Sigmoid colon (tissue), 7 donors: ENCODE measurements at regions of chr17 and their contacts with region 1.

Region 1: DNA sequence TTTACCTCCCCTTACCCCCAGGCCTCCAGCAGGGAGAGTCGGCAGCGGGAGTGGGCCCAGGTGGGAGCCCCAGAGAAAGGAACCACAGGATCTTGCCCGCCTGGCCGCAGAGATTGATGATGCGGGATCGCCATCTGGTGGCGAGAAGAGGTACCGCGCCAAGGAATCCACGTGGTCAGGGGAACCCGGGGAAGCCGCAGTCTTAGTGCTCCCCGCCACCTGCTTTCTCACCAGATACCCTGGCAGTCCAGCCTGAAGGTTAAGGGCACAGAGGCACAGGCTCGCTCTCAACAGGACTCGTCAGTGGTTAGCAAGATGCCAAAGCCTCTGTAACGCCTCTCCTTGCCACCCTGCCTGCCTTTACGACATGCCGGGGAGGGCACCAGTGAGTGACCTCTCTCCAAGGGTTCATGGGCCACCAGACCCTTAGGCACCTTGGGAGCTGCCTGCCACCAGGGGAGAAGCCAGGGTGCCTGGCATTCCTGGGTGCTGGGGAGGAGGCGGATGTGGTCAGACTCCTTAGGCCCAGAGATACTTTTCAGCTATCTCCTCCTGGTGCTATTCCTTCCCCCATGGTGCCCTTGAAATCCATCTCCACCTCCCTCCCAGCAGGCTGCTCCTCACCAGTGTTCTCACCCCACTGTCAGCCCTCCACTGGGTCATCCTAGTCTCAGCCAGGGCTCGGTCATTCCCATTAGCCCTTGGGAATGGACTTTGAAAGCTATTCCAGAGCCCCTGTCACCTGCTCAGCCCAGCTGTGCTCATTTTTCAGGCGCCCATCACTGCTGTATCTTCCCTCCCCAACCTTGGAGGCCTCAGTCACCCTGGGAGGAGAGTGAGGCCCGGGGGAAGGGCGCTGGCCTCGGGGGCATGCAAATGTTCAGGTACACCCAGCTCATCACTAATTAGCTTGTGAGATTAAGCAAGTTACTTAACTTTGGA is 5.5 kb upstream of the RHBDF2 start:
- DNase-seq: peak; percentile 90
- H3K4me3 ChIP-seq: no peak overlapping the region
- H3K27ac ChIP-seq: no peak overlapping the region
- H3K4me1 ChIP-seq: peaks cover 0 to 17% (median 5%) of the 10 kb centered on the region in 4 donors
- H3K27me3 ChIP-seq: peaks cover 0 to 15% (median 13%) of the 10 kb centered on the region in 3 donors
- CTCF ChIP-seq: peak; percentile 87 to 94 (median 93)
- EP300 ChIP-seq: no peak
- POLR2A ChIP-seq: no peak

Region 2: GRCh38 chr17:76408052-76408849 is 98.4 kb before region 1 on chr17:
- intact Hi-C with region 1: loop called (anchors 5 kb)
- DNase-seq: no peak
- H3K4me3 ChIP-seq: no peak overlapping the region
- H3K27ac ChIP-seq: no peak overlapping the region
- H3K4me1 ChIP-seq: peaks cover 0 to 10% (median 5%) of the 10 kb centered on the region in 4 donors
- H3K27me3 ChIP-seq: no peaks in the 10 kb centered on the region
- CTCF ChIP-seq: peak; percentile 26 to 60 (median 36)
- EP300 ChIP-seq: no peak
- POLR2A ChIP-seq: no peak

Region 3: DNA sequence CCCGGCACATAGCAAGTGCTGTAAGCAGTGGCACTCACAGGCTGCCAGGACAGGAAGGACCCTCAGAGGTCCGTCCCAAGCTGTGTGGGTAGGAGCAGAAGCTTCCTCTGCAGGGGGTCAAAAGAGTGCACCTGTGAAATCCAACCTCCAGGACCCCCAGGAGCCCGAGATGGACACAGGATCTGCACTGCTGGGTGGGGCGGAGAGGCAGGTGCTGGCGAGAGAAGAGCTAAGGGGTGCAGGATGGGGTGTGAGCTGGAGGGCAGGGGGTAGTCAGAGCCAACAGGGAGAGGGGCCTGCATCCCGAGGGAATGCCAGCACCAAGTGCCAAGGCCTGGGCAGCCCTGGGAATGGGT is 39.9 kb before region 1 on chr17:
- intact Hi-C with region 1: loop called (anchors 1 kb)
- DNase-seq: no peak
- H3K4me3 ChIP-seq: no peak overlapping the region
- H3K27ac ChIP-seq: no peak overlapping the region
- H3K4me1 ChIP-seq: no peaks in the 10 kb centered on the region
- H3K27me3 ChIP-seq: no peaks in the 10 kb centered on the region
- CTCF ChIP-seq: no peak
- EP300 ChIP-seq: no peak
- POLR2A ChIP-seq: no peak